IMR-90 (cell line): ENCODE measurements at regions of chr2 and their contacts with region 1.

Region 1: DNA sequence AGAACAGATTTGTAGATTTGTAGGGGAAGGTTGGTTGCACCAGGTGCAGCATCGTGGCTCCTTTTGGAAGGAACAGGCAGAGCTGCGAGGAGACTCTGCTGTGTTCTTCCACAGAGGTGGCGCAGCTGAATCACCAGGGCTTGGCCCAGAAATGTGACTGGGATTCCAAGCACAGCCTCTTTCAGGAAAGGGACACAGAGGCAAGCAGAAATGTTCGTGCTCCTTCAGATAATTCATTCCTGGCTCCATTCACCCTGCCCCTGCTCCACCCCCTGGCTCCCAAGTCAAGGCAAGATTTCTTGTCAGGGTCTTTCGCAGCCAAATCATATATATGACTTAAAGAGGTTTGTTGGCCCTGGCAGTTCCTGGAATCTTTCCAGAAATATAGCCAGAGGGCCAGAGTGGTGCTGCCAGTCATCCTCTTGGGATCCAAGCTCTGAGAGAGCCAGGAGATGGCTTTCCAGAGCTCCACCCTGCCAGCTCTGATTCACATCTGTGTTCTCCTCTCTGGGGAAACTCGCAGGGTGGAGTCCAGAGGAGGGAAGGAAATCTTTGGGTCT is 203.9 kb upstream of the TANK start:
- DNase-seq: no peak
- ATAC-seq: no peak
- H3K4me3 ChIP-seq: no peak overlapping the region
- H3K27ac ChIP-seq: no peak overlapping the region
- H3K4me1 ChIP-seq: no peaks in the 10 kb centered on the region; the same call in 1 of the 2 replicates
- H3K27me3 ChIP-seq: no peaks in the 10 kb centered on the region
- CTCF ChIP-seq: no peak
- POLR2A ChIP-seq: no peak
- RAD21 ChIP-seq: no peak

Region 2: GRCh38 chr2:160590664-160591063 is 365.7 kb before region 1 on chr2:
- CTCF ChIA-PET with region 1: no interaction called
- POLR2A ChIA-PET with region 1: no interaction called
- dilution Hi-C with region 1: no loop called
- in situ Hi-C with region 1: no loop called
- intact Hi-C with region 1: no loop called
- DNase-seq: no peak
- ATAC-seq: no peak
- H3K4me3 ChIP-seq: no peak overlapping the region
- H3K27ac ChIP-seq: no peak overlapping the region
- H3K4me1 ChIP-seq: no peaks in the 10 kb centered on the region
- H3K27me3 ChIP-seq: no peaks in the 10 kb centered on the region
- CTCF ChIP-seq: no peak
- POLR2A ChIP-seq: no peak
- RAD21 ChIP-seq: no peak

Region 3: GRCh38 chr2:160893581-160893980 is 62.7 kb before region 1 on chr2:
- CTCF ChIA-PET with region 1: no interaction called
- POLR2A ChIA-PET with region 1: no interaction called
- dilution Hi-C with region 1: no loop called
- in situ Hi-C with region 1: no loop called
- intact Hi-C with region 1: no loop called
- DNase-seq: no peak
- ATAC-seq: no peak
- H3K4me3 ChIP-seq: no peak overlapping the region
- H3K27ac ChIP-seq: no peak overlapping the region
- H3K4me1 ChIP-seq: no peaks in the 10 kb centered on the region
- H3K27me3 ChIP-seq: no peaks in the 10 kb centered on the region
- CTCF ChIP-seq: no peak
- POLR2A ChIP-seq: no peak
- RAD21 ChIP-seq: no peak

Region 4: GRCh38 chr2:160928854-160929620 is 27.3 kb before region 1 on chr2:
- CTCF ChIA-PET with region 1: interaction called, 10 read pairs
- POLR2A ChIA-PET with region 1: no interaction called
- dilution Hi-C with region 1: no loop called
- in situ Hi-C with region 1: no loop called
- intact Hi-C with region 1: no loop called
- DNase-seq: peak; percentile 31
- ATAC-seq: no peak
- H3K4me3 ChIP-seq: no peak overlapping the region
- H3K27ac ChIP-seq: peak overlapping the region; percentile 58; the same call in 1 of the 2 replicates
- H3K4me1 ChIP-seq: peaks cover 15% of the 10 kb centered on the region
- H3K27me3 ChIP-seq: no peaks in the 10 kb centered on the region
- CTCF ChIP-seq: no peak
- POLR2A ChIP-seq: no peak
- RAD21 ChIP-seq: no peak